ENCODE measurements at regions of chr11 and their contacts with region 1.

Region 1: GRCh38 chr11:2532704-2533586 is 88.1 kb downstream of the KCNQ1 start:
- DNase-seq: peak; percentile 90
- H3K4me3 ChIP-seq: peak overlapping the region in 1 of 2 experiments; percentile 34; a peak in 1 of 4 replicates
- H3K27ac ChIP-seq: peak overlapping the region in 1 of 2 experiments; percentile 62; a peak in 2 of 4 replicates
- H3K4me1 ChIP-seq: peaks cover 5 to 9% of the 10 kb centered on the region in 2 experiments; a peak in 2 of 4 replicates
- H3K27me3 ChIP-seq: no peaks in the 10 kb centered on the region
- CTCF ChIP-seq: peak; percentile 98
- EP300 ChIP-seq: no peak
- RAD21 ChIP-seq: peak; percentile 97

Region 2: DNA sequence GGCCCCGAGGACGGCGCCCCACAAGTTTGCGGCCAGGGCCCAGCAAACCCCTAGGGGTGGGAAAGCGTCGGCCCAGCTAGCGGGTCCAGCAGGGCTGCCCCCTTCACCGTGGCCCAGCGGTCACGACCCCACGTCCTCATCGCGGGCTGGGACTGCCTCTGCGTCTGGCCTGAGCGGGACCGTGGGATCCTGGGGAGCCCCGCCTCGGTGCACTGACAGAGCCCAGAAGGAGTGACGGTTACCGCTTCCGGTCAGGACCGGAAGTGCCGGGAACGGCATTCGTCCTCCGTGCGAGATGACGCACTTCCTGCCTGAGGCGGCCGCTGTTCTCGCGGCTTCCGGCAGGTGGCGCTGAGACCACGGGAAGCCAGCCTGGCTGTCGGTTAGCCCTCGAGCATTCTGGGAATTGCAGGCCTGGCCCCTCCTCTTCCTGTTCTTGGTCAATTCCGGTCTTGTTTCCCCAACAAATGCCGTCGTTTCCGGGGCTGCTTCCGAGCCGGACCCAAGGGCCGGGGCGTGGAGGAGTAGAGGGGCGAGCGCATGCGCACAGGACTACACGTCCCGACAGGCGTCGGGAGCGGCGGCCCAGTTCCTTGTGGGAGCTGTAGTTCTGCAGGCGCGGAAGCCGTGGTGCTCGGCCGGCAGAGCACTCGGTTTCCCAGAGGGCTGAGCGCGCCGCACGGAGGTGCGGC is 132.7 kb before region 1 on chr11 and contains the start of gene TSSC4:
- CTCF ChIA-PET with region 1: interaction called, 28 read pairs
- POLR2A ChIA-PET with region 1: interaction called, 3 read pairs
- DNase-seq: peak; percentile 99
- H3K4me3 ChIP-seq: peak within 1 kb of the TSS; percentile 99 to 100
- H3K27ac ChIP-seq: peak within 1 kb of the TSS; percentile 93 to 95
- H3K4me1 ChIP-seq: peaks cover 10 to 23% of the 10 kb centered on the region in 2 experiments; a peak in 2 of 4 replicates
- H3K27me3 ChIP-seq: no peaks in the 10 kb centered on the region
- CTCF ChIP-seq: peak; percentile 96
- EP300 ChIP-seq: peak in 1 of 2 experiments; percentile 25; a peak in 1 of 4 replicates
- RAD21 ChIP-seq: peak; percentile 83
- polyA plus RNA-seq, gene TSSC4: 45.1 and 45.3 TPM in 2 replicates

Region 3: DNA sequence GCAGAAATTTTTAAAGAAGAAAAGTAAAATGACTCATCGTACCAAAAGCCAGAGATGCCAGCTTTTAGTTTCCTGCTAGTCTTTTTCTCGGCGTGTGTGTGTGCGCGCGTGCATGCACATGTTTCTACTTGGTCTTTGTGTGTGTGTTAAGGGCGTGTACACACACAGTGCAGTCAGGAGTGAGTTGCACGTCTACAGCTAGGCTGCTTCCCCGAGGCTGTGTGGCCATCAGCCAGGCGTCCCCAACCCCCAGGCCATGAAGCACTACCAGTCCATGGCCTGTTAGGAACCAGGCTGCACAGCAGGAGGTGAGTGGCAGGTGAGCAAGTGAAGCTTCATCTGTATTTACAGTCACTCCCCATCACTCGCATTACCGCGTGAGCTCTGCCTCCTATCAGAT is 51.7 kb before region 1 on chr11:
- CTCF ChIA-PET with region 1: interaction called, 23 read pairs
- POLR2A ChIA-PET with region 1: no interaction called
- DNase-seq: no peak
- H3K4me3 ChIP-seq: no peak overlapping the region
- H3K27ac ChIP-seq: no peak overlapping the region
- H3K4me1 ChIP-seq: peaks cover 0 to 9% of the 10 kb centered on the region in 2 experiments; a peak in 1 of 4 replicates
- H3K27me3 ChIP-seq: no peaks in the 10 kb centered on the region
- CTCF ChIP-seq: no peak
- EP300 ChIP-seq: no peak
- RAD21 ChIP-seq: no peak

Region 4: DNA sequence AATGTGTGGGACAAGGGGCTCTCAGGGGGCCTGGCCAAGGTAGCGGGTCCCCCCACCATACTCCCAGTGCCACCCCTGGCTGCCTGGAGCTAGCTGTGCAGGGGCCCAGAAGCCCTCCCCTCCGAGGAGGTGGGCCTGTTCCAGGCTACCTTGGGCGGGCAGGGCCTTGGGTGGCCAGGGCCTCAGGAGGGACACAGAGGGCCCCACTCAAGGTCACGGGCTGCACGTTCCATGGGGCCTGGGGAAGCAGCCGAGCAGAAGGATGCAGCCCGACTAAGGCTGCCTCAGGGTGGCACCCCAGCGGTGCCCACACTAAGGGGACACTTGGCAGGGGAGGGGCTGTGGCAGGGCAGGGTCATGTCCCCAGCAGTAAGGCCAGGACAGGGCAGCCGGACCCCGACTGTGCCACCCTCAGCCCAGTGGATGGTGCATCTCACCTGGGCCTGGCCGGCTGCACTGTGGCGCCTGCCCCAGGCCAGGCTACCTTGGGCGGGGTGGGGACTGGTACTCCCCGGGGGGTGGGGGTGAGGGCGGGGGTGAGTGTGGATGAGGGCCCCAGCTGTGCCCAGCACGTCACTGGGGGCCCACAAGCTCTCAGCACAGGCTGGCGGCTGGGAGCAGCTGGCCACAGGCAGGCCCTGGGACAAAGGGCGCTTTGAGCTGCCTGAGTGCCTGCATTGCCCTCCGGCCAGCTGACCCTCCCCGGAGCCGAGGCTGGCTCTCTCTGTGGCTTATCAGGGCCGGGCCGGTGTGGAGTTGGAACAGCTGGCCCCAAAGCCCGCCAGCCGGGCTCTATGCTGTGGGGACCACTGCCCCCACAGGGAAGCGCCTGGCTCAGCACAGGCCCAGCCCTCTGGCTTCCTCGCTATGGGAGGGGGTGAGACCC is 29.0 kb after region 1 on chr11:
- CTCF ChIA-PET with region 1: interaction called, 20 read pairs
- POLR2A ChIA-PET with region 1: no interaction called
- DNase-seq: no peak
- H3K4me3 ChIP-seq: no peak overlapping the region
- H3K27ac ChIP-seq: no peak overlapping the region
- H3K4me1 ChIP-seq: no peaks in the 10 kb centered on the region; a peak in 1 of 4 replicates
- H3K27me3 ChIP-seq: no peaks in the 10 kb centered on the region
- CTCF ChIP-seq: no peak
- EP300 ChIP-seq: no peak
- RAD21 ChIP-seq: no peak

Region 5: DNA sequence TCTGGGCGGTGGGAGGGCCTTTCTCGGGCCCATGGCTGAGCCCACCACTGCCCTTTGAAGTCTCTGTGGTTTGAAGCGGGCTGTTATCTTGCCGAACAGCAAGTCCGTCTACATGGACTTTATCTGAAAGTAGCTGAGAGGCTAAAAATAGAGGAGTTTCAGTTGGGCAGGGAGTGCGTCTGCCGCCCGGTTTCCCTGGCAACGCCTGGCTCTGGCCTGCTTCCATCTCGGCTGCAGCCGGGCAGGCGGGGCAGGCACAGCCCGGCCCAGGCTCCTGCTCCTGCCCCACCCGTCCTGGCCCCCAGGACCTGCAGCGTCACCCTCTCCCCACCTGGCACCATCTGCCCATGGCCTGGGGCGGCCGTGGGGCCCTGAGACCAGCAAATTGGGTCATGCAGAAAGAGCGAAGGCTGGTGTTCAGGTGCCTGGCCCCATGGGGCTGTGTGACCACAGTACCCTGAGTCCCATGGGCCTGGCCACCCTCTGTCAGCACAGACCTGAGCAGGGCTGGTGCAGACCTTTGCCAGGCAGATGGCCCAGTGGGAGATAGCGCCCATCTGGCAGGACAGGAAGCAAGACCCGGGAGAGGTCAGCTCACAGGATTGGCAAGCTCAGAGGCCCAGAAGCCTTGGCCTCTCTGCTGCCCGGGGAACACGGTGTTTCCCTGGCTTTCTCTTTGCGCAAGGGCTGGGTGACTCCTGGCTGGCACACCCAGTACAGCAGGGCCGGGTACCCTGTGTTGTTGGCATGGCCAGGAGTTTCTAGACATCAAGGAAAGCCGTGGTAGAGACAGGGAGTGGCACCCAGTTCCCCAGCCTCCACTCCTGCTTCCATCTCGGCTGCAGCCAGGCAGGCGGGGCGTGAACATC is 245.9 kb after region 1 on chr11:
- CTCF ChIA-PET with region 1: interaction called, 72 read pairs
- POLR2A ChIA-PET with region 1: interaction called, 3 read pairs
- DNase-seq: peak; percentile 93
- H3K4me3 ChIP-seq: peak overlapping the region in 1 of 2 experiments; percentile 4; a peak in 1 of 4 replicates
- H3K27ac ChIP-seq: peak overlapping the region; percentile 72 to 99
- H3K4me1 ChIP-seq: peaks cover 10 to 73% of the 10 kb centered on the region in 2 experiments; a peak in 3 of 4 replicates
- H3K27me3 ChIP-seq: no peaks in the 10 kb centered on the region
- CTCF ChIP-seq: no peak
- EP300 ChIP-seq: peak in 1 of 2 experiments; percentile 58; a peak in 2 of 4 replicates
- RAD21 ChIP-seq: peak; percentile 62

Region 6: GRCh38 chr11:2901854-2902783 is 369.2 kb after region 1 on chr11:
- CTCF ChIA-PET with region 1: interaction called, 56 read pairs
- POLR2A ChIA-PET with region 1: no interaction called
- DNase-seq: peak; percentile 98
- H3K4me3 ChIP-seq: peak overlapping the region; percentile 78 to 80
- H3K27ac ChIP-seq: peak overlapping the region; percentile 35 to 58; a peak in 2 of 4 replicates
- H3K4me1 ChIP-seq: peaks cover 17 to 21% of the 10 kb centered on the region in 2 experiments; a peak in 3 of 4 replicates
- H3K27me3 ChIP-seq: no peaks in the 10 kb centered on the region
- CTCF ChIP-seq: no peak
- EP300 ChIP-seq: no peak; a peak in 1 of 4 replicates
- RAD21 ChIP-seq: no peak

Measured in SK-N-SH (cell line).